ENCODE measurements at regions of chr7 and their contacts with region 1.

Region 1: DNA sequence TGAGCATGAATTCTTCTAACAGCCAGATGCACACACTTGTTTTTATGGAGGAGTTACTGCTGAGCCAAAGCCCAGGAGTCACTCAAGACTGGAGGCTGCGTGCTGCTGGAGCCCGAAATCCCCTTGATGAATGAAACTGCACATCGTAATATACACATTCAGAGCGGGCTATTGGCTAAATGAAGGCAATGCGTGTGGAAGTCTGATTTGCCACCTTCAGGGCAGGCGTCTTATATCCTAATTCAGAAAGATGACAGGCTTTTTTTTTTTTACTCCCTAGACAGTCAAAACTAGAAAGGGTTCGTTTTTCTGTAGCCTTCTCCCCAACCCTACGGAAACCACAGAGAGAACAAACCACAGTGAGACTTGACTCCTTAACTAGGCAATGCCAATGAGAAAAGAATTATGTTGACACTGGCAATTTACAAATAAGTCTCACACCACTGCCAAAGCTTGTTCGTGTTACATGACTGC is 227.2 kb upstream of the KLF14 start:
- DNase-seq: peak; percentile 74
- ATAC-seq: peak; percentile 84
- H3K4me3 Mint-ChIP-seq: peak overlapping the region; percentile 99
- H3K27ac Mint-ChIP-seq: peak overlapping the region; percentile 100
- H3K4me1 Mint-ChIP-seq: peaks cover 40% of the 10 kb centered on the region
- H3K27me3 Mint-ChIP-seq: no peaks in the 10 kb centered on the region

Region 2: GRCh38 chr7:130896898-130897514 is 64.2 kb before region 1 on chr7:
- POLR2A ChIA-PET with region 1: interaction called, 10 read pairs
- DNase-seq: peak; percentile 78
- ATAC-seq: peak; percentile 54
- H3K4me3 Mint-ChIP-seq: peak overlapping the region; percentile 6
- H3K27ac Mint-ChIP-seq: peak overlapping the region; percentile 77
- H3K4me1 Mint-ChIP-seq: peaks cover 57% of the 10 kb centered on the region
- H3K27me3 Mint-ChIP-seq: no peaks in the 10 kb centered on the region

Region 3: DNA sequence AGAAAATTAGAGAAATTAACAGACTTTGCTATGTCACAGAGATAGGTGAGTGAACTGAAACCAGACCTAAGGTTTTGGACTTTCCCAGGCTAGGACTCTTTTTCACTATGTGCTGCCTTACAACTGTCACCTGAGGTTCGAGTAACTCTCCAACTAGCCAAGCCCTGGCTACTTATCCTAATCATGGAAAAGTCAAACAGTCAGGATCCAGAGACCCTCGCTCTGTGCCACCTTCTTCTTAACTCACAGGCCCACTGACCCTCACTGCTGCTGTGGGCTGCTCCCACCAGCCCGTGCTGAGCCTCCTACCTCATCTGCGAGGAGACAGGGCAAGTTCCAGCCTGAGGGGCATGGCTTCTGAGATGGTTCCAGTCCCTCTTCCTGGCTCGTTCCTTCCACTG is 15.8 kb before region 1 on chr7:
- POLR2A ChIA-PET with region 1: interaction called, 17 read pairs
- DNase-seq: no peak
- ATAC-seq: no peak
- H3K4me3 Mint-ChIP-seq: no peak overlapping the region
- H3K27ac Mint-ChIP-seq: peak overlapping the region; percentile 49
- H3K4me1 Mint-ChIP-seq: peaks cover 66% of the 10 kb centered on the region
- H3K27me3 Mint-ChIP-seq: no peaks in the 10 kb centered on the region

Measured in activated naive CD8-positive, alpha-beta T cell treated with anti-CD3 and anti-CD28 coated beads, Interleukin-2, amount 10 ng/mL, durations not matched to agents 7 days and 5 days (primary cell).